Lower leg skin (tissue), 4 donors: ENCODE measurements at regions of chr2 and their contacts with region 1.

Region 1: GRCh38 chr2:216023055-216023648 is 9.8 kb upstream of the MREG start:
- DNase-seq: no peak
- H3K4me3 ChIP-seq: no peak overlapping the region
- CTCF ChIP-seq: no peak
- POLR2A ChIP-seq: no peak

Region 2: DNA sequence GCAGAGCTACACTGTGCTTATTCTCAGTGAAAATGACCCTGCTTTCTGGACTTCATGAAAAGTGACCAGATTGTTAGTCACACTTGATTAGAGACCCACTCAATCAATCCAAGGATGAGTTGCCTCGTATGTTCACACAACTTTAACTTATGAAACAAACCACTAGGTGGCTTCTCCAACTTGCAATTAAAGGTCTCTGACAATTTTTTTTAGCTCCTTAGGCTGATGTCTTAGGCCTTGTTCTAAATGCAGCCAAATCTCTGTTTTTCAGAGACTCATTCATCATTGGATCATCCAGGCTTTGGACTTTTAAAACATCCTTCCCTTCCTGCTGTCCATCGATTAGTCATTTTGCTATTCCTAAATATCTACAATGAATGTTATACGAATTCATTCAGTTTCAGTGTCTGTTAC is 73.2 kb before region 1 on chr2:
- intact Hi-C with region 1: loop called (anchors 10 kb)
- DNase-seq: no peak
- H3K4me3 ChIP-seq: no peak overlapping the region
- CTCF ChIP-seq: peak in 1 of 3 donors; percentile 36
- POLR2A ChIP-seq: no peak